Activated CD4-positive, alpha-beta T cell treated with anti-CD3 and anti-CD28 coated beads, Interleukin-2, amount 10 ng/mL, durations not matched to agents 24 days and 14 days (primary cell): ENCODE measurements at regions of chr19 and their contacts with region 1.

Region 1: DNA sequence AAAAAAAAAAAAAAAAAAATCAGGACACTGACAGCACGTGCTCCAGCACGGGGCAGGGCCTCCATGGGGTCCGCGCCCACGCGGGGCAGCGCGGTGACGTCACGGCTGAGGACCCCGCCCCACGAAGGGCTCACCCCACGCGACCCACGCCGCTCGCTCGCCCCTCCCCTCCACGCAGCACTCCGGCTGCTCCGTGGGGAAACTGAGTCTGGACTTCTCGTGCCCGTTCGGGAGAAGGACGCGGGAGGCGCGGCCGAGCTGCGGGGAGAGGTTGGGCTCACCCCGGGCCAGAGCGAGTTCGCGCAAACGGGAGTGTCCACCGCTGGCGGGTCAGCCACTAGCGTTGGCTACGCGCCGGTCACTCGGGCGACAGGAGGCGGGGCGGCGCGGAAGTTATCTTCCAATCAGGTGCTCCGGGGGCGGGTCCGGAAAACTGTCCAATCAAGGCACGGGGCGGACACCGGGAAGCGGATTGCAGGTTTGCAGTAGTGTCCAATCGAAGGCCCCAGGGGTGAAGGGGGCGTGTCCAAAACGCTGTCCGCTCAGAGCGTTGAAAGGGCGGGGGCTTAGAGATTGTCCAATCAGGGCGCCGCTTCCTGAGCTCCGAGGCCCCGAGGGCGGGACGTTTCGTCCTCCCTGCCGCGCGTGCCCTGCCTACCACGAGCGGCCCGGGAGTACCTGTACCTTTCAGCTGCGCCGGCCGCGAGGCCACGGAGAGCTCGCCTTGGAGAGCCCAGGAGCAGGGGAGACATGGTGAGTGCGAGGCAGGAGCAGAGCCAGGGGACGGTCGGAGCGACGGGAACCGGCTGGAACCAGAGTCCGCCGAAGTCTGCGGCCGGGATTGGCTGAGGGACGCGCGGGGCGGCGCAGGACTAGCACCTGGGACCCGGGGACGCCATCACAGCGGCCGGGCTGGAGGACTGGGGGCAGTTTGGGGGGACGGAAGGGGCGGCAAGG is at the start of gene ZNF57:
- DNase-seq: peak; percentile 97
- H3K4me3 Mint-ChIP-seq: peak within 1 kb of the TSS; percentile 92
- H3K27ac Mint-ChIP-seq: peak within 1 kb of the TSS; percentile 92
- H3K4me1 Mint-ChIP-seq: peaks cover 7% of the 10 kb centered on the region
- H3K27me3 Mint-ChIP-seq: no peaks in the 10 kb centered on the region
- total RNA-seq, gene ZNF57: 2.6 and 2.8 TPM in 2 replicates

Region 2: GRCh38 chr19:2840794-2841790 is 59.5 kb before region 1 on chr19 and contains the start of gene ZNF555:
- intact Hi-C with region 1: loop called (anchors 2 kb)
- DNase-seq: peak; percentile 96
- H3K4me3 Mint-ChIP-seq: peak within 1 kb of the TSS; percentile 83
- H3K27ac Mint-ChIP-seq: peak within 1 kb of the TSS; percentile 58
- H3K4me1 Mint-ChIP-seq: no peaks in the 10 kb centered on the region
- H3K27me3 Mint-ChIP-seq: peaks cover 10% of the 10 kb centered on the region
- total RNA-seq, gene ZNF555: 0.90 and 0.98 TPM in 2 replicates

Region 3: DNA sequence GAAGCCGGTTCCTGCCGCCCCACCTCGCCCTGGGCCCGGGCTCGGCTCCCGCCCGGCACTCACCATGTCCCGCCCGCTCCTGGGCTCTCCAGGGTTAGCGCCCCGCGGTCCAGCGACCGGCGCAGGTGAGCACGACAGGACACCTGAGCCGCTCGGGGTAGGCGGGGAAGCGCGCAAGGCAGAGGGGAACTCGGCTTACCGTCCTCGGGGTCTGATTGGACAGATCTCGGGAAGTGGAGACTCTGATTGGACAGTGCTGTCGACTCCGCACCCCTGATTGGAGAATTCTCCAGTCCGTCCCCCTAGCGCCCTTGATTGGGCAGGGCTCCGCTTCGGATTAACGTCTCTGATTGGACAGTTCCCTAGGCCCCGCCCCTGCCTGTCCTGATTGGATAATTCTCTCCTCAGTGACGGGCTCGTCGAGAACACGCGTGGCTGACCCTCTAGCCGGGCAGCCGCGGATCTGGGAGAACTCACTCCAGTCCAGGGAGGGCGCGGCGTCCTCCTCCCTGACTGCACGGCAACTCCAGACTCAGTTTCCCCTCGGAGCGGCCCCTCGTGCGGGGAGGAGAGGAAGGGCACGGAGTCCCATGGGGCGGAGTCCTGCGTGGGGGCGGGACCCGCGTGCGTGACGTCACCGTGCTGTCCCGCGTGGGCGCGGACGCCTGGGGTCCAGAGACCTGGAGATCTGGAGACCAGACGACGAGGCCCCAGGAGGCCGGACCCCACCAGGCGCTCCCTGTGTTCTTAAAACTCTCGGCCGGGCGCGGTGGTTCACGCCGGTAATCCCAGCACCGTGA is 44.4 kb after region 1 on chr19 and contains the start of gene ZNF77:
- intact Hi-C with region 1: loop called (anchors 1 kb)
- DNase-seq: peak; percentile 99
- H3K4me3 Mint-ChIP-seq: peak within 1 kb of the TSS; percentile 96
- H3K27ac Mint-ChIP-seq: peak within 1 kb of the TSS; percentile 96
- H3K4me1 Mint-ChIP-seq: peaks cover 17% of the 10 kb centered on the region
- H3K27me3 Mint-ChIP-seq: no peaks in the 10 kb centered on the region
- total RNA-seq, gene ZNF77: 4.8 and 5.8 TPM in 2 replicates